CD14-positive monocyte (primary cell): ENCODE measurements at regions of chr7 and their contacts with region 1.

Region 1: DNA sequence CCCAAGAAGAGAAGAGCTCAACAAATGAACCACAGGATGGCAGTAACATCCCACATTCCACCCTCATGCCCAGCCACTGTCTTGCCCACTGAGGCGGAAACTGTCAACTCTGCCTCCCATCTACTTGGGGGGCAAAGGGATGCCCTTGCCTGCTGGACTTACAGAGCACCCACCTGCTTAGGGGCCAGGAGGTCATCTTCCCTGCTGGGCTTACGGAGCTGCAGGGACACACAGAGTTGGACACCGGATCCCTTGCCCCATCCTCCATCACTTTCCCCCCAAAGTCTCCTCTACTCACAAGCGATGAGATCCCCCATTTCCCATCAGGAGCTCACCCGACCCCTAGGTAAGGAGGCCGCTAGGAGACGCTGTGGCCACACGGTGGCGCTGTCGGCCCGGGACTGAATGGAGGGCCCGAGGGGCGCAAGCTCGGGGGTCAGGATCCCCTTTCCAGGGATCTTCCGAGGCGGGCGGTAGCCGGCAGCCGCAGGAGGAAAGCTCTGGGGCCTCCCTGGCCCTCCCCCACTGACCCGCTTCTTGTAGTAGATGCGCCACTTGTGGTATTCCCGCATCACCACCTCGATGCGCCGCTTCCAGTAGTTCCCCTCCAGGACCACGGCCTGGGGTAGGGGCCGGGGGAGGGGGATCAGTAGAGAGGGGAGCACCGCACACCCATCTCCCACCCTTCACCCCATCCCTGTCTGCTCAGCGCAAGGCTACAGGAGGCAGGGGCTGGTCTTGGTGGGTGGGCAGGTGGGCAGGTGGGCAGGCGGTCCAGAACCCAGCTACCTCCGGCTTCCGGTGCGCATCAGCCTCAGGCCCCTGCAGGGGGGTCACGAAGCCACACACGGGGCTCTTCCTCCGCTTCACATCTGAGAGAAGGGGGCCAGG is 17.3 kb downstream of the MLXIPL start:
- DNase-seq: peak; percentile 37 to 51 (median 50)
- H3K4me3 ChIP-seq: peak overlapping the region in 1 of 3 experiments; percentile 40
- H3K4me3 Mint-ChIP-seq: peak overlapping the region in 1 of 2 donors; percentile 81
- H3K27ac ChIP-seq: no peak overlapping the region
- H3K27ac Mint-ChIP-seq: peak overlapping the region in 3 of 7 donors; percentile 11 to 72 (median 48)
- H3K4me1 ChIP-seq: peaks cover 17 to 24% of the 10 kb centered on the region in 2 donors
- H3K4me1 Mint-ChIP-seq: peaks cover 21% of the 10 kb centered on the region
- H3K27me3 ChIP-seq: peaks cover 0 to 57% of the 10 kb centered on the region in 2 donors
- H3K27me3 Mint-ChIP-seq: peaks cover 60 to 85% (median 78%) of the 10 kb centered on the region in 3 donors
- CTCF ChIP-seq: peak; percentile 99

Region 2: GRCh38 chr7:73541722-73542121 is 65.3 kb before region 1 on chr7:
- intact Hi-C with region 1: no loop called
- DNase-seq: no peak
- H3K4me3 ChIP-seq: no peak overlapping the region
- H3K4me3 Mint-ChIP-seq: no peak overlapping the region
- H3K27ac ChIP-seq: no peak overlapping the region
- H3K27ac Mint-ChIP-seq: peak overlapping the region in 3 of 7 donors; percentile 3 to 42 (median 6)
- H3K4me1 ChIP-seq: no peaks in the 10 kb centered on the region
- H3K4me1 Mint-ChIP-seq: peaks cover 6% of the 10 kb centered on the region
- H3K27me3 ChIP-seq: no peaks in the 10 kb centered on the region
- H3K27me3 Mint-ChIP-seq: no peaks in the 10 kb centered on the region
- CTCF ChIP-seq: no peak

Region 3: GRCh38 chr7:73557108-73557396 is 50.0 kb before region 1 on chr7:
- intact Hi-C with region 1: loop called in 1 of 2 experiments (anchors 10 kb)
- DNase-seq: peak; percentile 93 to 94 (median 93)
- H3K4me3 ChIP-seq: peak overlapping the region; percentile 73 to 99 (median 75)
- H3K4me3 Mint-ChIP-seq: peak overlapping the region; percentile 86 to 92
- H3K27ac ChIP-seq: peak overlapping the region; percentile 87 to 93
- H3K27ac Mint-ChIP-seq: peak overlapping the region; percentile 93 to 98 (median 96)
- H3K4me1 ChIP-seq: peaks cover 21 to 23% of the 10 kb centered on the region in 2 donors
- H3K4me1 Mint-ChIP-seq: peaks cover 34% of the 10 kb centered on the region
- H3K27me3 ChIP-seq: no peaks in the 10 kb centered on the region
- H3K27me3 Mint-ChIP-seq: peaks cover 1 to 7% (median 5%) of the 10 kb centered on the region in 3 donors
- CTCF ChIP-seq: no peak

Region 4: DNA sequence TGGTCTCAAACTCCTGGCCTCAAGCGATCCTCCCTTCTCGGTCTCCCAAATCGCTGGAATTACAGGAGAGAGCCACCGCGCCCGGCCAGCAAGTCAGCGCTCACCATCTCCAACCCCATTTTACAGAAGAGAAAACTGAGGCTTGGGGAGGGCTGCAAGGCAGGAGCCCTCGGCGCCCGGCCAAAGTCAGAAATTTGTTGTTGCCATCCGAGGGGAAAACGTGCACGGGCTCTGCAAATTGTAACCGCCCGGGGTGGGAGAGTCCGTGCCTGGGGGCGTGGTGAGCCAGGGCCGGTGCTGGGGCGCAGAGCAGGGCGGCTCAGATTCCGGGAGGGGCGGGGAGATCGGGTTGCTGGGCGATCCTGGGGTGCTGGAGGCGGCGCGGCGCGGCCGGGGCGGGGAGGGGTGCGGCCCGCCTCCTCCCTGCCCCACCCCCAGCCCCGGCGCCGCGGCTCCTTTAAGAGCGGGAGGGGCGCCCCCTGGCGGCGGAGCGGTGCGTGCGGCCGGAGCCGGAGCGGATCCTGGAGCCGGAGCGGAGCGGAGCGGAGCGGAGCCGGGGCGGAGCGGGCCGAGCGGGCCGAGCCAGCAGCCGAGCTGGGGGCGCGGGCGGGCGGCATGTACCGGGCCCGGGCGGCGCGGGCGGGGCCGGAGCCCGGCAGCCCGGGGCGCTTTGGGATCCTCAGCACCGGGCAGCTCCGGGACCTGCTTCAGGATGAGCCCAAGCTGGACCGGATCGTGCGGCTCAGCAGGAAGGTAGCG is 60.5 kb after region 1 on chr7 and contains the start of gene VPS37D:
- intact Hi-C with region 1: loop called (anchors 5 kb)
- DNase-seq: peak; percentile 82 to 86 (median 83)
- H3K4me3 ChIP-seq: peak within 1 kb of the TSS; percentile 8 to 63 (median 17)
- H3K4me3 Mint-ChIP-seq: peak within 1 kb of the TSS; percentile 69 to 76
- H3K27ac ChIP-seq: no peak within 1 kb of the TSS
- H3K27ac Mint-ChIP-seq: peak within 1 kb of the TSS in 1 of 7 donors; percentile 66
- H3K4me1 ChIP-seq: peaks cover 9 to 13% of the 10 kb centered on the region in 2 donors
- H3K4me1 Mint-ChIP-seq: peaks cover 12% of the 10 kb centered on the region
- H3K27me3 ChIP-seq: peaks cover 25 to 66% of the 10 kb centered on the region in 2 donors
- H3K27me3 Mint-ChIP-seq: peaks cover 66 to 91% (median 76%) of the 10 kb centered on the region in 3 donors
- CTCF ChIP-seq: peak; percentile 73
- polyA plus RNA-seq, gene VPS37D: not detected

Region 5: DNA sequence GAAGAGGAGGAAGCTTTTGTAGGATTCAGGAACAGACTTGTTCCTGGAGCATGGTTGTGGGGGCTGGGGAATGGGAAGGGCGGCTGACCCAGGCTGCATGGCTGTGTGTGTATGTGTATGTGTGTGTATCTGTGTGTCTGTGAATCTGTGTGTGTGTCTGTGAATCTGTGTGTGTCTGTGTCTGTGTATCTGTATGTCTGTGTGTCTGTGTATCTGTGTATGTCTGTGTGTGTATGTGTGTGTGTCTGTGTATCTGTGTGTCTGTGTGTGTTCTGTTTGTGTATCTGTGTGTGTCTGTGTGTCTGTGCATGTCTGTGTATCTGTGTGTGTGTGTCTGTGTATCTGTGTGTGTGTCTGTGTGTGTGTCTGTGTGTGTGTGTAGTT is 119.0 kb after region 1 on chr7:
- intact Hi-C with region 1: loop called (anchors 5 kb)
- DNase-seq: no peak
- H3K4me3 ChIP-seq: no peak overlapping the region
- H3K4me3 Mint-ChIP-seq: no peak overlapping the region
- H3K27ac ChIP-seq: no peak overlapping the region
- H3K27ac Mint-ChIP-seq: no peak overlapping the region
- H3K4me1 ChIP-seq: no peaks in the 10 kb centered on the region
- H3K4me1 Mint-ChIP-seq: peaks cover 7% of the 10 kb centered on the region
- H3K27me3 ChIP-seq: peaks cover 13 to 65% of the 10 kb centered on the region in 2 donors
- H3K27me3 Mint-ChIP-seq: peaks cover 53 to 66% (median 58%) of the 10 kb centered on the region in 3 donors
- CTCF ChIP-seq: peak; percentile 3